ENCODE measurements at regions of chr12 and their contacts with region 1.

Region 1: DNA sequence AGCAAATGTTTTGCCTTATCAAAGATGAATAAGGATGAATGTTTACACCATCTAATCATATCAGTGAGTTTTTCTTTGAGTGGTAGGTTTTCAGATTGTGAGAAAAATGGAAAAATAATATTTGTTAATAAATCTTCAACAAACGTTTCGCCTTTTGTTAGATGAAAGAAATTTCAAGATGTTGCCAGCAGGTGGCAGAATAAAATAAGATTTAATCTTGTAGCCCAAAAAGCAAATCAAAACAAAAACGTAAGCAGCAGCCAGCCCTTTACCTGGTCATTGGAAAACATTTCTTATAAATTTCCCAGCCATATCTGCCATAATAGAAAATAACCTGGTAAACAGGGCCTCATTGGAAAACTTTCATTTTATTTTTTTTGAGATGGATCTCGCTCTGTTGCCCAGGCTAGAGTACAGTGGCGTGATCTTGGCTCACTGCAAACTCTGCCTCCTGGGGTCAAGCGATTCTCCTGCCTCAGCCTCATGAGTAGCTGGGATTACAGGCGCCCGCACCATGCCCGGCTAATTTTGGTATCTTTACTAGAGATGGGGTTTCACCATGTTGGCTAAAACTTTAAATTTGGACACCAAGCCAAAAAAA is 15.4 kb upstream of the TMEM120B start:
- DNase-seq: no peak
- H3K4me3 ChIP-seq: no peak overlapping the region
- H3K27ac ChIP-seq: no peak overlapping the region
- H3K4me1 ChIP-seq: peaks cover 0 to 4% (median 2%) of the 10 kb centered on the region in 4 donors
- H3K27me3 ChIP-seq: no peaks in the 10 kb centered on the region
- CTCF ChIP-seq: peak; percentile 54 to 87 (median 62)
- EP300 ChIP-seq: no peak
- POLR2A ChIP-seq: no peak

Region 2: DNA sequence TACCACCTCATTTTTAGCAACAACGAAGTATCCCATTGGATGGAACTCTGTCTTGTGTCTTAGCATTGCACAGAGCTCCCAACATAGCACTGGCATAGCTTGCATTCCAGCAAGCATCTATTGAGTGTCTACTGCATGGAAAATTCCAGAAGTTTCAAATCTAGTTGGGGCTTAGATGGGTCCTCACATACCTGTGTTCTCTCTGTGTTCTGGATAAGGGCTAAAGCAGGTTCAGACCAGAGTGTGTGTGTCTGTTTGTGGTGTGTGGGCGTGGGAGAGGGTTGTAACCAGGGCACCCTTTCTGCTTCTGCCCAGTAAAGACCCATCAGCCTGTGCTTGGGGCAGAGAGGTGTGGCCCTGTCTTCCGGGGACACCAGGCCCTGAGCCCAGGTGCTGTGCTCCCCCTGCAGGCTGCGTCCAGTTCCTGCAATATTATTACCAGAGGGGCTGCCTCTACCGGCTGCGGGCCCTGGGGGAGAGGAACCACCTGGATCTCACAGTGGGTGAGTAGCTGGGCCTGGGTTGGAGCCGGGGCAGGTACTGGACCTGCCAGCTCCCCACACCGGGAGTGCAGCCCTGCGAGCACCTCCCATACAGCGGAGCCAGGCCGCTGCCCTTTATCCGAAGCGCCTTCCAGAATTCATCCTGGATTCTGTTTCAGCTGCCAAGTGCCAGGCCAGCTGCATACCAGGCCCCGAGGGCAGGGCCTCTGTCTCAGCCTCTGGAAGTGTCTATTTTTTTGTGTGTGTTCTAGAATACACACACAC is 76.0 kb after region 1 on chr12:
- in situ Hi-C with region 1: loop called in 3 of 4 experiments (anchors 5 to 10 kb)
- intact Hi-C with region 1: loop called (anchors 2 kb)
- DNase-seq: peak; percentile 84
- H3K4me3 ChIP-seq: no peak overlapping the region
- H3K27ac ChIP-seq: peak overlapping the region in 2 of 4 donors; percentile 3 to 7
- H3K4me1 ChIP-seq: peaks cover 3 to 19% (median 8%) of the 10 kb centered on the region in 4 donors
- H3K27me3 ChIP-seq: no peaks in the 10 kb centered on the region
- CTCF ChIP-seq: peak; percentile 83 to 92 (median 86)
- EP300 ChIP-seq: no peak
- POLR2A ChIP-seq: no peak

Region 3: DNA sequence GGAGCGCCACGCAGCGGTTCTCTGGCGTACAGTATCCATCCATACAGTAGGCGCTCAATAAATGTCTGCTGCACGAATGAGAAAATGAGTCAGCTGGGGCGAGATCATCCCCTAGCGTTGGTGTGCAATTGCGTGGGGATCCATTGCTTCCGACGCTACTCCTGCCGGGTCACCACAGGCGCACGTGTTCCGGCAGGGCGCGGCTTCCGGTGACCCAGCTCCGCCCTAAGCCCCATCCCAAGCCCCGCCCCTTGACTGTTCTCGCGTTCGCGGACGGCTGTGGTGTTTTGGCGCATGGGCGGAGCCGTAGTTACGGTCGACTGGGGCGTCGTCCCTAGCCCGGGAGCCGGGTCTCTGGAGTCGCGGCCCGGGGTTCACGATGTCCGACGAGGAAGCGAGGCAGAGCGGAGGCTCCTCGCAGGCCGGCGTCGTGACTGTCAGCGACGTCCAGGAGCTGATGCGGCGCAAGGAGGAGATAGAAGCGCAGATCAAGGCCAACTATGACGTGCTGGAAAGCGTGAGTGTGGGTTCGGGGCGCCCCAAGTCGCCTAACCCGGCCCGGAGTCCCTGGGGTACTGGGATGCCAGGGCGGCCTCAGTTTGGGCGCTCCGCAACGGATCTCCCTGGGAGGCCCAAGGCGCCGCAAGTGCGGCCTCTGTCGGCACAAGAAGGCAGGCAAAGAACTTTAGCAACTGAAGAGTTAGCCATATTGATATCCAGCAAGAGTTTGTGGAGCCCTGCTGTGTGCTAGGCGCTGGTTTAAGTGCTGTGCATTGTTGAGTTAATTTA is 191.5 kb after region 1 on chr12 and contains the start of gene PSMD9:
- in situ Hi-C with region 1: loop called in 2 of 4 experiments (anchors 10 kb)
- intact Hi-C with region 1: no loop called
- DNase-seq: peak; percentile 99
- H3K4me3 ChIP-seq: peak within 1 kb of the TSS; percentile 67 to 87 (median 84)
- H3K27ac ChIP-seq: peak within 1 kb of the TSS; percentile 97 to 99 (median 98)
- H3K4me1 ChIP-seq: peaks cover 20 to 45% (median 24%) of the 10 kb centered on the region in 4 donors
- H3K27me3 ChIP-seq: no peaks in the 10 kb centered on the region
- CTCF ChIP-seq: peak; percentile 48 to 66 (median 62)
- EP300 ChIP-seq: no peak
- POLR2A ChIP-seq: peak; percentile 86
- total RNA-seq, gene PSMD9: 21.7 to 57.3 (median 46.2) TPM

Measured in transverse colon (tissue), 4 donors.